B cell (primary cell): ENCODE measurements at regions of chr11 and their contacts with region 1.

Region 1: DNA sequence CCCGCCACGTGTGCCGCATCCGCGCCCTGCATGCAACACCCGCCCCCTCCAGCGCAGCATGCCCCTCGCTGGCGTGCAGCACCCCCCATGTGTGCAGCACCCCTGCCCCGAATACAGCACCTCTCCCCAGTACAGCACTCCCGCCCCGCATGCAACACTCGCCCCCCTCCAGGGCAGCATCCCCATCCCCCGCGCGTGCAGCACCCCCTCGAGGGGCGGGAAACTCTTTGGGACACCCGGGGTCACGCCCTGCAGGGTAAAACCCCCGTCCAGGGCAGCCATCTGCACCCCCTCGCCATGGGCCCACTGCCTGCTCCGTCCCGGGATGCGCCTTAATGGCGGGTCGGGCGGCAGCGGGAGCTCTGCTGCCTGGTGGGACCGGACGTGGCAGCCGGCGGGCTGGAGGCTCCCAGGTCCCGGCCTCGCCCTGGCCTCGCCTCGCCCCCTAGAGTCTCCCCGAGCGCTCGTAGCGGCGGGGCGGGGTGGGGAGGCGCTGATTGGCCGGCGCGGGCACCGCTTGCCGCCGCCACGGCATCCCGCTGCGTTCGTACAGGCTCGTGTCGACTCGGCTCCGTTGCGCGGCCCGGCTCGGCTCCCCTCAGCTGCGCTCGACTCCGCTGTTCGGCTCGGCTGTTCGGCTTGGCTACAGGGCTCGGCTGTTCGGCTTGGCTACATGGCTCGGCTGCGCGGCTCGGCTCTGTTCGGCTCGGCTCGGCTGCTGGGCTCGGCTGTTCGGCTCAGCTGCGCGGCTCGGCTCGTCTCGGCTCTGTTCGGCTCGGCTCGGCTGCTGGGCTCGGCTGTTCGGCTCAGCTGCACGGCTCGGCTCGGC is 417 bp upstream of the BRSK2 start:
- DNase-seq: peak; percentile 97
- ATAC-seq: peak; percentile 94
- H3K4me3 ChIP-seq: peak overlapping the region in 4 of 5 experiments; percentile 56 to 70 (median 64)
- H3K4me3 Mint-ChIP-seq: peak overlapping the region; percentile 79
- H3K27ac ChIP-seq: peak overlapping the region in 1 of 2 donors; percentile 39
- H3K27ac Mint-ChIP-seq: peak overlapping the region; percentile 63
- H3K4me1 ChIP-seq: peaks cover 22 to 29% of the 10 kb centered on the region in 2 donors
- H3K4me1 Mint-ChIP-seq: peaks cover 35% of the 10 kb centered on the region
- H3K27me3 ChIP-seq: peaks cover 0 to 42% (median 23%) of the 10 kb centered on the region in 4 experiments
- H3K27me3 Mint-ChIP-seq: peaks cover 26% of the 10 kb centered on the region
- CTCF ChIP-seq: peak; percentile 26

Region 2: DNA sequence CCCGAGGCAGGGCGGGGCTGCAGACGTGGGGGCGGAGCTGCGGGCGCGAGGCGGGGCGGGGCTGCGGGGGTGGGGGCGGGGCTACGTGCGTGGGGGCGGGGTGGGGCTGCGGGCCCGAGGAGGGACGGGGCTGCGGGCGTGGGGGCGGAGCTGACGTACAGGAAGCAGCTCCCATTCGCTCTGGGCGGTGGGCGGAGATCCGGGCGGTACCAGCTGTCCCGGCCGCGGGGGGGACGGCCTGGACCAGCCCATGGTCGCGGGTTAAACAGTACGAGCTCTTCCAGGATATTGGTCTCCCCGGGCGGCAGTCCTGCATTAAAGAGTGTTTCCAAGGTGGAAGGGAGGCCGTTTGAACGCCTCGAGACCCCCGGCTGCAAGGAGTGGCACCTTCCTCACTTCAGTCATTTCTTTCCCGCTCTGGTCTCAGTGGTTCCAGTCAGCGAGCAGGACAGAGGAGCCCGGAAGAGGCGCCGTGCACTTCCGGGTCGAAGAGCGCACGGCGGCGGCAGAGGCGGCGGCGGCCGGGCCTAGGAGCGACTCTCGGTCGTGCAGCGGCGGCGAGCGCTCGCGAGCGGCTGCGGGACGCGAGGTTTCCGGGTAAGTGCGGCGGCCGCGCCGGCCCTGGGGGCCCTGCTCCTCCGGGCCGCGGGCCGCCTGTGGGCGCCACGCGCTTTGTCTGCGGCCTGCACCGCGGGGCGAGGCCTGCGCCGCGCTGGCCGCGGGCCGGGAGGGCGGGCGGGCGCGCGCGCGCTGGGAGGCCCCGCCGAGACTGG is 813.1 kb before region 1 on chr11 and contains the start of gene PHRF1:
- CTCF ChIA-PET with region 1: no interaction called
- POLR2A ChIA-PET with region 1: no interaction called
- intact Hi-C with region 1: loop called (anchors 10 kb)
- DNase-seq: peak; percentile 98
- ATAC-seq: peak; percentile 87
- H3K4me3 ChIP-seq: peak within 1 kb of the TSS; percentile 65 to 95 (median 86)
- H3K4me3 Mint-ChIP-seq: peak within 1 kb of the TSS; percentile 93
- H3K27ac ChIP-seq: peak within 1 kb of the TSS; percentile 97 to 98
- H3K27ac Mint-ChIP-seq: peak within 1 kb of the TSS; percentile 99
- H3K4me1 ChIP-seq: peaks cover 30 to 44% of the 10 kb centered on the region in 2 donors
- H3K4me1 Mint-ChIP-seq: peaks cover 44% of the 10 kb centered on the region
- H3K27me3 ChIP-seq: peaks cover 0 to 18% (median 8%) of the 10 kb centered on the region in 4 experiments
- H3K27me3 Mint-ChIP-seq: peaks cover 15% of the 10 kb centered on the region
- CTCF ChIP-seq: no peak
- total RNA-seq, gene PHRF1: 57.9 and 63.5 TPM in 2 replicates

Region 3: GRCh38 chr11:1202776-1203504 is 186.4 kb before region 1 on chr11:
- CTCF ChIA-PET with region 1: no interaction called
- POLR2A ChIA-PET with region 1: no interaction called
- intact Hi-C with region 1: loop called (anchors 5 kb)
- DNase-seq: peak; percentile 77
- ATAC-seq: peak; percentile 90
- H3K4me3 ChIP-seq: no peak overlapping the region
- H3K4me3 Mint-ChIP-seq: no peak overlapping the region
- H3K27ac ChIP-seq: no peak overlapping the region
- H3K27ac Mint-ChIP-seq: no peak overlapping the region
- H3K4me1 ChIP-seq: peaks cover 0 to 6% of the 10 kb centered on the region in 2 donors
- H3K4me1 Mint-ChIP-seq: no peaks in the 10 kb centered on the region
- H3K27me3 ChIP-seq: peaks cover 0 to 13% (median 0%) of the 10 kb centered on the region in 4 experiments
- H3K27me3 Mint-ChIP-seq: no peaks in the 10 kb centered on the region
- CTCF ChIP-seq: peak; percentile 86

Region 4: GRCh38 chr11:1262172-1263006 is 126.9 kb before region 1 on chr11:
- CTCF ChIA-PET with region 1: no interaction called
- POLR2A ChIA-PET with region 1: no interaction called
- intact Hi-C with region 1: loop called (anchors 1 kb)
- DNase-seq: peak; percentile 83
- ATAC-seq: peak; percentile 94
- H3K4me3 ChIP-seq: peak overlapping the region in 4 of 5 experiments; percentile 54 to 67 (median 62)
- H3K4me3 Mint-ChIP-seq: peak overlapping the region; percentile 87
- H3K27ac ChIP-seq: peak overlapping the region; percentile 25 to 79
- H3K27ac Mint-ChIP-seq: peak overlapping the region; percentile 86
- H3K4me1 ChIP-seq: peaks cover 12 to 20% of the 10 kb centered on the region in 2 donors
- H3K4me1 Mint-ChIP-seq: peaks cover 19% of the 10 kb centered on the region
- H3K27me3 ChIP-seq: no peaks in the 10 kb centered on the region
- H3K27me3 Mint-ChIP-seq: no peaks in the 10 kb centered on the region
- CTCF ChIP-seq: no peak